Right ventricle myocardium inferior (tissue), 1 donor: ENCODE measurements at regions of chr20 and their contacts with region 1.

Region 1: DNA sequence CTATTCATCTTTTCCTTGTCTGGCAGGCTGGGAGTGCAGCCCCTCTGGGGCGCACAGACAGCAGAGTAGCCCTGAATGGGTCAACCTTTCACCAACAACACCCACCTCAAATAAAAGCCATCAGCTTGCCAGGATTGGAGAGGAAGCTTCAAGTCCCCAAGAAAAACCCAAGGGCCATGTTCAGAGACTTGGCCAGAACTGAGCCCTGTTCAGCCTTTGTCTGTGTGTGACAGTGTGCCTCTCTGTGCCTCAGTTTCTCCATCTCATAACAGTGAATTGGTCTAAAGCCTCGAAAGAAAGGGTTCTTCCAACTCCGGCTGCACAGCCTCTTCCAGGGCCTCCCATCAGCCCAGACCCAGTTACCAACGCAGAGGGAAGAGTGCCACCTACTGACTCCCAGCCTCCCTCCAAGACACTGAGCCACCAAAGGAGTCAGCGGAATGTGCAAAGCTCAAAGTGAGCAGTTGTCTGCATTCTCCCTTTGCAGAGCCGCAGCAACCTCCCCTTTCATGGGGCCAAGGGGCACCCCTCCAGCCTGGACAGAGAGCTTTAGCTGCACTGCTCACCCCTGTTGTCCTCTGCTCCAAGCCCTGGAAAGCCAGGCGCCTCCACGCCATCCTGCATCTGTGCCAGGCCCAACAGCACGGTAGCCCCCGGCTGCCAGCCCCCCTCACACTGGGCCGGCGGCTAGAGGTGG is 82.7 kb upstream of the TOP1 start:
- DNase-seq: no peak
- ATAC-seq: peak; percentile 88

Region 2: DNA sequence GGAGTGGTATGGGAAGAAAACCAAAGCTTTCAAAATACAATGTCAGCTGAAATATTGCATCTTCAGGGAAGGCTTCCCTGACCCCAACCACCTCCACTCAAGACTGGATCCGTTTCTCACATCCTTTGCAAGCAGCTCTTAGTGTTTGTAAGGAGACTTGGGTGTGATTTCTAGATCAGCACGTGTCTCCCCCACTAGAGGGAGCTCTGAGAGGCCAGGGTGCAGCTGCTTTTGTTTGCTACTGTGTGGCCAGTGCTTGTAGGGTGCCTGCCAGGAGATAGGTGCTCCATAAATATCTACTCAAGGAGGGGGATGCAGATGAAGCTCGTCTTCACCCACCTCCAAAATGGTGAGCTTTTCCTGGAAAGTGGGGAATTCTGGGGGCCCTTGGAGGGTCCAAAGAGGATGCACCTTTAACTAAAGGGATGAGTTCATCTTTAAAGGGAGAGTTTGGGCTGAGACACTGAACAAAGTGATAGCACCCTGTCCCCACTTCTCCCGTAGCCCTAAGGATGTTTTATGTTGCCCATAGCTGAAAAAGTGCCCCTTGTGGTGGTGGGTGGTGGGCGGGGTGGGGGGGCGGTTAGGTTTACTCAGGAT is 204.3 kb before region 1 on chr20:
- intact Hi-C with region 1: loop called (anchors 10 kb)
- DNase-seq: no peak
- ATAC-seq: no peak

Region 3: DNA sequence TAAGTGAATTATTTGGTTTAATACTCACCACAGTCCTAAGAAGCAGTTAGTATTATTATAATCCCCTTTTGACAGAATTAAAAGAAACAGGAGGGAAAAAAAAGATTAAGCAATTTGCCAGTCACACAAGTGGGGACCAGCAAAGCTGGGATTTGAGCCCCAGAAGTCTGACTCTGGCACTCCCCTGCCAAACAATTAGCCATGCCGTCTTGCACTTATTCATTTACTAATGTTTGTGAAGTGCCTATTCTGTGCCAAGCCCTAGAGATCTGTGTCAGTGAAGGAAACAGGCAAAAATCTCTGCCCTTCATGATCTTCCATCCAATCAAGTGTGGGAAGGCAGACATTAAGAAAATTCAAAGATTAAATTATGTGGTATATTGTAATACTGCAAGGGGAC is 43.2 kb before region 1 on chr20:
- intact Hi-C with region 1: no loop called
- DNase-seq: no peak
- ATAC-seq: no peak